Activated B cell treated with CpG ODN at 0.5 μM for 24 hours (primary cell): ENCODE measurements at regions of chr17 and their contacts with region 1.

Region 1: DNA sequence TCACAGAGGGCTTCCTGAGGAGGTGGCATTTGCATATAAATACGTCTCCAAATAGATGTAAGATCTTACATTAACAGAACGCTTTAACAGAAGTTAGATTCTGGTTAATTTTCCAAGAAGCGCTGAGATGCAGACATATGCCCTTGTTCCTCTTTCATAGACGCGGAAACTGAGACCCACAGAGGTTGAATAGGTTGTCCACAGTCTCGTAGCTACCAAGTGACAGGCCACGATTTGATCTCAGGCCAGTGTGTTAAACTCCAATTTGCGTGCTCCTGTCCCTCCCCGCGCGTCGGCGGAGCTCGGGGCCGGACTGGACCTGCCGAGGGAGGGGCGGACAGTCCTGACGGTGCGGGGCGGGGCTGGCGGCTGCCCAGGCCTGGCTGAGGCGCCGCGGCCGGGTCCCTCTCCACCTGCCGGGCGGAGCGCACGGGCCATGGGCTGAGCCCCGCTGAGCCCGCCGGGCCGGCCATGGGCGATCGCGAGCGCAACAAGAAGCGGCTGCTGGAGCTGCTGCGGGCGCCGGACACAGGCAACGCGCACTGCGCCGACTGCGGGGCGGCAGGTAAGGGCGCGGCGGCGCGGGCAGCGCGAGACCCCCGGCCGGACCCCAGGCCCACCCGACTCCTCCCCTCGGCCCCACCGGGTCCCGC is at the start of gene ADAP2:
- DNase-seq: peak; percentile 53
- ATAC-seq: peak; percentile 73
- H3K4me3 Mint-ChIP-seq: peak within 1 kb of the TSS; percentile 93
- H3K27ac Mint-ChIP-seq: peak within 1 kb of the TSS; percentile 77
- H3K4me1 Mint-ChIP-seq: peaks cover 23% of the 10 kb centered on the region
- H3K27me3 Mint-ChIP-seq: peaks cover 1% of the 10 kb centered on the region
- CTCF ChIP-seq: no peak
- total RNA-seq, gene ADAP2: 16.0 and 16.9 TPM in 2 replicates

Region 2: GRCh38 chr17:30780343-30780742 is 141.3 kb before region 1 on chr17:
- CTCF ChIA-PET with region 1: no interaction called
- POLR2A ChIA-PET with region 1: no interaction called
- intact Hi-C with region 1: no loop called
- DNase-seq: no peak
- ATAC-seq: no peak
- H3K4me3 Mint-ChIP-seq: no peak overlapping the region
- H3K27ac Mint-ChIP-seq: peak overlapping the region; percentile 25
- H3K4me1 Mint-ChIP-seq: peaks cover 6% of the 10 kb centered on the region
- H3K27me3 Mint-ChIP-seq: no peaks in the 10 kb centered on the region
- CTCF ChIP-seq: no peak

Region 3: GRCh38 chr17:30831663-30832437 is 89.8 kb before region 1 on chr17 and contains the start of gene ATAD5:
- CTCF ChIA-PET with region 1: no interaction called
- POLR2A ChIA-PET with region 1: no interaction called
- intact Hi-C with region 1: loop called (anchors 2 kb)
- DNase-seq: peak; percentile 84
- ATAC-seq: peak; percentile 97
- H3K4me3 Mint-ChIP-seq: peak within 1 kb of the TSS; percentile 97
- H3K27ac Mint-ChIP-seq: peak within 1 kb of the TSS; percentile 91
- H3K4me1 Mint-ChIP-seq: peaks cover 23% of the 10 kb centered on the region
- H3K27me3 Mint-ChIP-seq: no peaks in the 10 kb centered on the region
- CTCF ChIP-seq: no peak
- total RNA-seq, gene ATAD5: 6.6 and 8.7 TPM in 2 replicates

Region 4: GRCh38 chr17:30906101-30906911 is 15.4 kb before region 1 on chr17 and contains the start of gene TEFM:
- CTCF ChIA-PET with region 1: no interaction called
- POLR2A ChIA-PET with region 1: interaction called, 5 read pairs
- intact Hi-C with region 1: loop called (anchors 1 kb)
- DNase-seq: peak; percentile 90
- ATAC-seq: peak; percentile 98
- H3K4me3 Mint-ChIP-seq: peak within 1 kb of the TSS; percentile 95
- H3K27ac Mint-ChIP-seq: peak within 1 kb of the TSS; percentile 93
- H3K4me1 Mint-ChIP-seq: peaks cover 42% of the 10 kb centered on the region
- H3K27me3 Mint-ChIP-seq: no peaks in the 10 kb centered on the region
- CTCF ChIP-seq: no peak
- total RNA-seq, gene TEFM: 23.0 and 25.2 TPM in 2 replicates

Region 5: GRCh38 chr17:30939051-30939689 is 17.5 kb after region 1 on chr17:
- CTCF ChIA-PET with region 1: no interaction called
- POLR2A ChIA-PET with region 1: interaction called, 15 read pairs
- intact Hi-C with region 1: no loop called
- DNase-seq: no peak
- ATAC-seq: peak; percentile 77
- H3K4me3 Mint-ChIP-seq: peak overlapping the region; percentile 64
- H3K27ac Mint-ChIP-seq: peak overlapping the region; percentile 86
- H3K4me1 Mint-ChIP-seq: peaks cover 13% of the 10 kb centered on the region
- H3K27me3 Mint-ChIP-seq: no peaks in the 10 kb centered on the region
- CTCF ChIP-seq: no peak

Region 6: DNA sequence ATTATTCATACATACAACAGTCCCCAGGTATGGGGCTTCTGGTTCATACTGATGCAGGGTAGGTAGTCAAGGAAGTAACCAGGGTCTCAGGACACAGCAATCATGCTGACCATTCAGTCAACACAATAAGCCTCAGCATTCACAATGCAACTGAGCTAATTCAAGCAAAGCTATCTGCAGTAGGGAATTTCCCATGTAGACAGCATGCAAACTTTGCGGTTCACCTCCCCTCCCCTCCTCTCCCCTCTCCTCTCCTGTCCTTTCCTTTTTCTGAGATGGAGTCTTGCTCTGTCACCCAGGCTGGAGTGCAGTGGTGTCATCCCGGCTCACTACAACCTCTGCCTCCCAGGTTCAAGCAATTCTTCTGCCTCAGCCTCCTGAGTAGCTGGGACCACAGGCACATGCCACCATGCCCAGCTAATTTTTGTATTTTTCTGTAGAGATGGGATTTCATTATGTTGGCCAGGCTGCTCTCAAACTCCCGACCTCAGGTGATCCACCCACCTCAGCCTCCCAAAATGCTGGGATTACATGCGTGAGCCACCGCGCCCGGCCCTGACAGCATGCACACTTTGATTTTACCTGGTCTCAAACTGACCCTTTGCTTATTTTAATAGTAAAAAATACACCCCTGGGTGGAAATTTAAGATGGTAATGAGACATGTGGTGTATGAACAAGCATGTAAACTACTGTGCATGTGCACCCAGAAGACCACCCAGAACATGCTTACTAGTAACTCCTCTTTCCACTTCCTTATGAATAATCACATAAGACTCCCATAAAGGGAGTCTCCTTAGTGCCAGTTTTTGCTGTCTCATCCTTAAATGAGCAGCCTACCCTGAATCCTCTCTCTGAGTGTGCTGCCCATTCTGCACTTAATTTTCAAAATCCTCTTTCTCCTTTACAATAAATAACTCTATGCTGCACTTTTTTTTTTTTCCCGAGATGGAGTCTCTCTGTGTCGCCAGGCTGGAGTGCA is 39.8 kb after region 1 on chr17:
- CTCF ChIA-PET with region 1: interaction called, 3 read pairs
- POLR2A ChIA-PET with region 1: interaction called, 22 read pairs
- intact Hi-C with region 1: loop called (anchors 1 kb)
- DNase-seq: peak; percentile 53
- ATAC-seq: peak; percentile 72
- H3K4me3 Mint-ChIP-seq: peak overlapping the region; percentile 78
- H3K27ac Mint-ChIP-seq: peak overlapping the region; percentile 88
- H3K4me1 Mint-ChIP-seq: peaks cover 72% of the 10 kb centered on the region
- H3K27me3 Mint-ChIP-seq: no peaks in the 10 kb centered on the region
- CTCF ChIP-seq: no peak